Activated T-helper 1 cell treated with anti-CD3 and anti-CD28 coated beads, Interleukin-12 subunit alpha, Interleukin-12 subunit beta, Interleukin-2, Interleukin-4 antibody, amounts not matched to agents 30 ng/mL and 10 ng/mL and 1 ng/mL, durations not matched to agents 14 hours and 24 hours and 36 hours (primary cell): ENCODE measurements at regions of chr1 and their contacts with region 1.

Region 1: GRCh38 chr1:153805042-153805745 is 30.0 kb downstream of the SLC27A3 start:
- DNase-seq: peak; percentile 44
- H3K4me3 Mint-ChIP-seq: peak overlapping the region; percentile 12
- H3K27ac Mint-ChIP-seq: peak overlapping the region; percentile 79
- H3K4me1 Mint-ChIP-seq: peaks cover 26% of the 10 kb centered on the region
- H3K27me3 Mint-ChIP-seq: no peaks in the 10 kb centered on the region

Region 2: GRCh38 chr1:153790966-153791647 is 14.1 kb before region 1 on chr1:
- intact Hi-C with region 1: loop called (anchors 2 kb)
- DNase-seq: peak; percentile 19
- H3K4me3 Mint-ChIP-seq: peak overlapping the region; percentile 5
- H3K27ac Mint-ChIP-seq: peak overlapping the region; percentile 69
- H3K4me1 Mint-ChIP-seq: peaks cover 32% of the 10 kb centered on the region
- H3K27me3 Mint-ChIP-seq: peaks cover 16% of the 10 kb centered on the region

Region 3: GRCh38 chr1:153849487-153850185 is 44.4 kb after region 1 on chr1:
- intact Hi-C with region 1: loop called (anchors 1 kb)
- DNase-seq: no peak
- H3K4me3 Mint-ChIP-seq: peak overlapping the region; percentile 5
- H3K27ac Mint-ChIP-seq: peak overlapping the region; percentile 66
- H3K4me1 Mint-ChIP-seq: peaks cover 25% of the 10 kb centered on the region
- H3K27me3 Mint-ChIP-seq: no peaks in the 10 kb centered on the region